Activated T-helper 1 cell treated with anti-CD3 and anti-CD28 coated beads, Interleukin-12 subunit alpha, Interleukin-12 subunit beta, Interleukin-2, Interleukin-4 antibody, amounts not matched to agents 30 ng/mL and 10 ng/mL and 1 ng/mL, durations not matched to agents 14 hours and 24 hours and 36 hours (primary cell): ENCODE measurements at regions of chr1 and their contacts with region 1.

Region 1: DNA sequence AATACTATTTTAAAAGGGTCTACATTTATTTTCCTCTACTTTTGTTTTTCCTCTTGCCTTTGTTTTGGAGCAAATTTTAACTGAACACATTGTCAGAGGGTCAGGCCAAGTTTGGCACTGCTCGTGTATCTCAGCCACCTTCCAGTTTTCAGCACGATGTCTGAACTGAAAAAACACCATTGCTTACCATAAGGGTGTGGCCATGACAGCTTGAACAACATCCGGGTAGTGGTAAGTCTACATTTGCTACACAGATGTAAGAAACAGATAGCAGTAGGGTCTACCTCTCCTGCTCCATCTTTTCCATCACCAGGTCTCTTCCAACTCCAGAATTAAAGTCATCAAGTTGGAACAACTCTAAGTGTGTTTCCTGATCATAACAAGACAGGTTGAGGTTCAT is 4.2 kb downstream of the HIVEP3 start:
- DNase-seq: no peak
- H3K4me3 Mint-ChIP-seq: peak overlapping the region; percentile 54
- H3K27ac Mint-ChIP-seq: peak overlapping the region; percentile 95
- H3K4me1 Mint-ChIP-seq: peaks cover 75% of the 10 kb centered on the region
- H3K27me3 Mint-ChIP-seq: peaks cover 1% of the 10 kb centered on the region

Region 2: GRCh38 chr1:41898191-41898713 is 16.3 kb before region 1 on chr1:
- intact Hi-C with region 1: loop called (anchors 1 kb)
- DNase-seq: peak; percentile 77
- H3K4me3 Mint-ChIP-seq: peak overlapping the region; percentile 78
- H3K27ac Mint-ChIP-seq: peak overlapping the region; percentile 94
- H3K4me1 Mint-ChIP-seq: peaks cover 86% of the 10 kb centered on the region
- H3K27me3 Mint-ChIP-seq: no peaks in the 10 kb centered on the region

Region 3: DNA sequence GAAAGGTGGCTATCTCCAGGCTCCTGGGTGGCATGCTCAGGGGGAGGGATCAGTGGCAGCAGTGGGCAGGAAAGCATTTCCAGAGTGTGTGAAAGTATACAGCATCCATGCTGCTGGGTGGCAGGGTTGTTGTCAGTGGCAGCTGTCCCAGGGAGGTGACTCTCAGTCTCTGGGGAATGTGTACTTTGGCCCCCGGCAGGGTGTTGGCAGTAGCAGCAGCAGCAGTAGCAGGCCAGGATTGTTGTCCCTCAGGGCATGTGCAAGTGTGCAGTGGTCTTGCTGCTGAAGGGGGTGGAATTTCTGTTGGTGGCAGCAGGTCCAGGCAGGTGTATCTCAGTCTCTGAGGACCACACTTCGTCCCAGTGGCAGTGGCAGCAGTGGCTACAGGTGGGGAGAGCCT is 167.0 kb after region 1 on chr1:
- intact Hi-C with region 1: no loop called
- DNase-seq: no peak
- H3K4me3 Mint-ChIP-seq: no peak overlapping the region
- H3K27ac Mint-ChIP-seq: no peak overlapping the region
- H3K4me1 Mint-ChIP-seq: no peaks in the 10 kb centered on the region
- H3K27me3 Mint-ChIP-seq: peaks cover 28% of the 10 kb centered on the region

Region 4: GRCh38 chr1:42282024-42282579 is 367.6 kb after region 1 on chr1:
- intact Hi-C with region 1: no loop called
- DNase-seq: no peak
- H3K4me3 Mint-ChIP-seq: no peak overlapping the region
- H3K27ac Mint-ChIP-seq: no peak overlapping the region
- H3K4me1 Mint-ChIP-seq: peaks cover 29% of the 10 kb centered on the region
- H3K27me3 Mint-ChIP-seq: no peaks in the 10 kb centered on the region